Heart left ventricle (tissue), 16 donors: ENCODE measurements at regions of chr12 and their contacts with region 1.

Region 1: GRCh38 chr12:26853303-26854030 is 20.5 kb upstream of the ITPR2 start:
- DNase-seq: peak; percentile 54 to 73 (median 66)
- ATAC-seq: peak; percentile 76 to 84 (median 81)
- H3K4me3 ChIP-seq: no peak overlapping the region
- H3K27ac ChIP-seq: no peak overlapping the region
- H3K4me1 ChIP-seq: peaks cover 0 to 15% (median 4%) of the 10 kb centered on the region in 12 donors
- H3K27me3 ChIP-seq: no peaks in the 10 kb centered on the region
- CTCF ChIP-seq: peak; percentile 76 to 96 (median 86)
- POLR2A ChIP-seq: no peak

Region 2: GRCh38 chr12:26791301-26791791 is 62.1 kb before region 1 on chr12:
- intact Hi-C with region 1: no loop called
- DNase-seq: no peak
- ATAC-seq: peak in 3 of 4 donors; percentile 21 to 56 (median 43)
- H3K4me3 ChIP-seq: no peak overlapping the region
- H3K27ac ChIP-seq: peak overlapping the region in 1 of 12 donors; percentile 79
- H3K4me1 ChIP-seq: peaks cover 0 to 62% (median 13%) of the 10 kb centered on the region in 12 donors
- H3K27me3 ChIP-seq: no peaks in the 10 kb centered on the region
- CTCF ChIP-seq: no peak
- POLR2A ChIP-seq: no peak

Region 3: DNA sequence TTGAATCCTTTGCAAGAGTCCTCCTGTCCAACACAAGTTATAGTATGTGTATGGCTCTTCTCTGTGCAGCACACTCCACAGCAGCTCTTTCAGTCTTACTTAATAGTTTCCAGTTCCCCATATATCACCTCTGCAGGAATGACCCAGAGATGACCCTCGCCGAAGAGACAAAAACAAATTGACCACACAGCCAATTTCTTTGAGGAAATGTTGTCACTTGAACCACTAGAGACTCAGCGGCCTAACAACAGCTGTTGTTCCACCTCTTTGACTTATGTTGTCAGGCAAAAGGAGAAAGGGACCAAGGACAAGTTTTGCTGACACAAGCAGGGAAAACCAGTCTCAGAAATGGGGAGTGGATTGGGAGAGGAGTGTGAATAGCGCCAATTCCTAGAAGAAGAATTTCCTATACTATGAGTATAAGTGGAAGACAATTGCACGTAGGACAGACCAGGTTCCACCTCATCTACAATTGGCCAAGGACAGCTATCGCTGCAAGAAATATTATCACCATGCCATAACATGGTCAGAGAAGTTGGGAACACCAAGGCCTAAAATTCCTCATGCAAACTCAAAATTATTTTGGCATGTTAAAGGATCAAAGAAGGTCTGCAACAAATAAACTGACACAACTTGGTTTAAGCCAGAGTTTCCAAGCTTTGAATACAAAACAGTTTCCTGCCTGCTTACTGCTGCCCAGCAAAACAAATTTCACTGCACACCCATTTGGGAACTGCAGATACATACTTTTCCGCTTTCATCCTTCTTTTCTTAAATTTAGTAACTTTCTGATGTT is 21.2 kb after region 1 on chr12:
- intact Hi-C with region 1: loop called in 1 of 10 experiments (anchors 1 kb)
- DNase-seq: peak in 1 of 5 donors; percentile 23
- ATAC-seq: peak in 1 of 4 donors; percentile 11
- H3K4me3 ChIP-seq: no peak overlapping the region
- H3K27ac ChIP-seq: peak overlapping the region in 1 of 12 donors; percentile 15
- H3K4me1 ChIP-seq: peaks cover 6 to 55% (median 30%) of the 10 kb centered on the region in 12 donors
- H3K27me3 ChIP-seq: no peaks in the 10 kb centered on the region
- CTCF ChIP-seq: no peak
- POLR2A ChIP-seq: no peak

Region 4: DNA sequence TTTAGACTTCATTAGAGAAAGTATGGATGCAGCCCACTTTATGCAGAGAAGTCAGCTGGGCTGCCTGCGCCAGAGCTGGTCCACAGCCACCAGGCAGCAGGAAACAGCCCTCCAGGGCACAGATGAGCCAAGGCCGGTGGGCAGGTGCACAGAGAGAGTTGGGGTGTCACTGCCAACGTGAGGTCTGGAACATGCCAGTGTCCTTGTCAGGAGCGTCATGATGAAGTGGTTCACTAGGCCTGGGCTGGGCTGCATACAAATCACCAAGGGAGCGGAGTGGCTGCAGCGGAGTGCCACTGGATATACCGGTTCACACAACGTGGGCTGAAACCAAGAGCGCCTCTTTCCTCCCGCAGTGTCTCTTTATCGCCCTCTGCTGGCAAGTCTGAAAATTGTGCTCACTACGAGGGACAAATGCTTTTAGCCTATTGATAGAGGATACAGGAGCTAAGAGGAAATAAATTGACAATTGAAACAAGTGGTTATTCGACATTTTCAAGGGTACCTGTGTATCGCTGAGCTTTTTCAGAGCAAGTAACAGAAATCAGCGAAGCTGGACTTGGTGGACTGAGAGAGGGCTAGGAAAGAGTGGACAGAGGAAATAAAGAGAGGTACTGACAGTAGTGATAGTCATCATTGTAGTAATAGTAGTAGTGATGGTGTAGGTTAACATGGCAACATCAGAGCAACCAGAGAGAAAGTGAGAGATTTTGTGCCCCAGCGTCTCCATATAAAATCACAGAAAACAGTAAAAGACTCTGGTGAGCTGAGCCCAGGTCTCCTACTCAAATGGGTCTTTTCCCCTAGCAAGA is 31.5 kb after region 1 on chr12:
- intact Hi-C with region 1: loop called (anchors 1 to 5 kb)
- DNase-seq: peak; percentile 80 to 82 (median 80)
- ATAC-seq: peak; percentile 80 to 96 (median 94)
- H3K4me3 ChIP-seq: peak overlapping the region in 1 of 12 donors; percentile 18
- H3K27ac ChIP-seq: no peak overlapping the region
- H3K4me1 ChIP-seq: peaks cover 0 to 8% (median 3%) of the 10 kb centered on the region in 12 donors
- H3K27me3 ChIP-seq: no peaks in the 10 kb centered on the region
- CTCF ChIP-seq: peak; percentile 90 to 97 (median 95)
- POLR2A ChIP-seq: no peak

Region 5: GRCh38 chr12:26937875-26938700 is 84.6 kb after region 1 on chr12 and contains the starts of genes FGFR1OP2 and INTS13:
- intact Hi-C with region 1: loop called in 1 of 10 experiments (anchors 10 kb)
- DNase-seq: peak; percentile 99 to 100 (median 99)
- ATAC-seq: peak; percentile 97 to 99 (median 98)
- H3K4me3 ChIP-seq: peak within 1 kb of the TSS; percentile 70 to 97 (median 88)
- H3K27ac ChIP-seq: peak within 1 kb of the TSS; percentile 94 to 98 (median 97)
- H3K4me1 ChIP-seq: peaks cover 3 to 69% (median 39%) of the 10 kb centered on the region in 12 donors
- H3K27me3 ChIP-seq: no peaks in the 10 kb centered on the region
- CTCF ChIP-seq: no peak
- POLR2A ChIP-seq: peak; percentile 77 to 98
- total RNA-seq, gene FGFR1OP2: 26.3 to 54.9 (median 30.8) TPM
- total RNA-seq, gene INTS13: 14.1 to 24.1 (median 18.5) TPM

Region 6: GRCh38 chr12:26971963-26972362 is 118.5 kb after region 1 on chr12:
- intact Hi-C with region 1: no loop called
- DNase-seq: no peak
- ATAC-seq: no peak
- H3K4me3 ChIP-seq: no peak overlapping the region
- H3K27ac ChIP-seq: no peak overlapping the region
- H3K4me1 ChIP-seq: peaks cover 0 to 10% (median 0%) of the 10 kb centered on the region in 12 donors
- H3K27me3 ChIP-seq: no peaks in the 10 kb centered on the region
- CTCF ChIP-seq: no peak
- POLR2A ChIP-seq: no peak